Activated CD4-positive, alpha-beta memory T cell treated with anti-CD3 and anti-CD28 coated beads, Interleukin-2, amount 10 ng/mL, durations not matched to agents 7 days and 5 days (primary cell): ENCODE measurements at regions of chr3 and their contacts with region 1.

Region 1: DNA sequence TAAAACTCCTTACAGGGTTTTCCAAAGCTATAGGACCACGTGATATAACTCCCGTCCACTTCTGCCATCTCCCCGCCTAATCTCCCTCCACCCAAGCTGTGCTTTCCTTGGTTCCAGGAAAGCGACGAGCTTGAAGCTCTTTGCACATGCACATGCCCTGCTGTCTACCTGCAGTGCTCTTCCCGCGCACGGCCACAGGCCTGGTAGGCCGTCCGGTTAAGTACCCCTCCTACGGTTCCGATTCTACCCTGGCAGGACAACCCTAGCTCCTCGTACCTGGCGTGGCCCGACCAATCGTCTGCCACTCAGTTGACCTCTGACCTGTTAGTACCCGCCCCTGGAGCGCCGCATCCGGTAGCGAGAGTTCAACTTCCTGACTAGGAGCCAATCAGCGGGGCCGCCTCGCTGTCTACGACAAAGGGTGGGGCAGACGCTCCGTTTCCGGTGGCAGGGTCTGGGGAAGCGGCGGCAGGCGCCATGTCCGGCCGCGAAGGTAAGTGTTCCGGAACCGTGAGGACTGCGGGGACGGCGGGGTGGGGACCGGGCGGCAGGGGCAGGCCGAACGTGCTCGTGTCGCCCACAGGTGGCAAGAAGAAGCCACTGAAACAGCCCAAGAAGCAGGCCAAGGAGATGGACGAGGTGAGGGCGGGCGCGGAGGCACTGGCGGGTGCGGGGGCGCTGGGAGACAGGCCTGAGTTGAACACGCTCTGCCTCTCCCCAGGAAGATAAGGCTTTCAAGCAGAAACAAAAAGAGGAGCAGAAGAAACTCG is at the starts of genes CCDC51 and TMA7:
- DNase-seq: peak; percentile 99
- H3K4me3 Mint-ChIP-seq: peak within 1 kb of the TSS; percentile 89
- H3K27ac Mint-ChIP-seq: peak within 1 kb of the TSS; percentile 93
- H3K4me1 Mint-ChIP-seq: peaks cover 43% of the 10 kb centered on the region
- H3K27me3 Mint-ChIP-seq: no peaks in the 10 kb centered on the region
- total RNA-seq, gene CCDC51: 14.9 to 17.5 TPM
- total RNA-seq, gene TMA7: 240 to 241 TPM

Region 2: GRCh38 chr3:48232734-48233133 is 207.3 kb before region 1 on chr3:
- CTCF ChIA-PET with region 1: interaction called, 18 read pairs
- POLR2A ChIA-PET with region 1: no interaction called
- DNase-seq: peak; percentile 66
- H3K4me3 Mint-ChIP-seq: no peak overlapping the region
- H3K27ac Mint-ChIP-seq: no peak overlapping the region
- H3K4me1 Mint-ChIP-seq: peaks cover 5% of the 10 kb centered on the region
- H3K27me3 Mint-ChIP-seq: peaks cover 3% of the 10 kb centered on the region

Region 3: GRCh38 chr3:48273594-48274211 is 166.3 kb before region 1 on chr3:
- CTCF ChIA-PET with region 1: interaction called, 86 read pairs
- POLR2A ChIA-PET with region 1: interaction called, 5 read pairs
- DNase-seq: peak; percentile 57
- H3K4me3 Mint-ChIP-seq: no peak overlapping the region
- H3K27ac Mint-ChIP-seq: no peak overlapping the region
- H3K4me1 Mint-ChIP-seq: peaks cover 15% of the 10 kb centered on the region
- H3K27me3 Mint-ChIP-seq: no peaks in the 10 kb centered on the region

Region 4: GRCh38 chr3:48422270-48422669 is 17.7 kb before region 1 on chr3:
- CTCF ChIA-PET with region 1: interaction called, 26 read pairs
- POLR2A ChIA-PET with region 1: no interaction called
- DNase-seq: no peak
- H3K4me3 Mint-ChIP-seq: no peak overlapping the region
- H3K27ac Mint-ChIP-seq: no peak overlapping the region
- H3K4me1 Mint-ChIP-seq: no peaks in the 10 kb centered on the region
- H3K27me3 Mint-ChIP-seq: peaks cover 4% of the 10 kb centered on the region

Region 5: DNA sequence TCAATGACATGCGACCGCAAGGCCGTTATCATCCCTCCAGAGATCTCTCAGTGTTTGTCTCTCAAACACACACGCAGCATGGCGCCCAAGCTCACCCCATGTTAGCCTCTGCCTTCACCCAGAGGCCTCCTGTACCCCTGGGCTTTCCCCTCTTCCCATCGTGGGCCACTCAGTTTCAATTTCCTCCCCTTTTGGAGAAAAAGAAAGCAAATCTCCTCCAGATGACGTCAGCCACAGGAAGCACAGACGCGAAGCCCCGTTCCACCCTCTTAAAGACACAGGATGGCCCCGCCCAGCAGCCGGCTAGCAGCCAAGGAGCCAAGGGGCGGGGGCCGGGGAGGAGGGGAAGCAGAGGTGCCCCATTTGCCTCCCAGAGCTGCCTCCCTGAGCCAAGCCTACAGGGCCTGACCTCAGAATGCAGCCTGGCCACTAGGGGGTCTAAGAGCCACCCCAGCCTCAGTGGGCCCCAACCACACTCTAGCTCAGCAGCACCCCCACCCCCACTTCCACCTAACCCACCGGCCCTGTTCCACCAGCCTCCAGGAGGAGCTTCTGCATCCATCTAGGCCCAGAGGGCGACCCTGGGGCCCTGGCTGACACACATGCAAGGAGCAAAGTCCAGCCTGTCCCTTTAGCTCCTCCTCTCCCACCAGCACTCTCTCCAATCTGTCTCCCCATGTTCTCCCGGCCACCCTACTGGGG is 33.1 kb after region 1 on chr3:
- CTCF ChIA-PET with region 1: interaction called, 40 read pairs
- POLR2A ChIA-PET with region 1: interaction called, 69 read pairs
- DNase-seq: peak; percentile 97
- H3K4me3 Mint-ChIP-seq: peak overlapping the region; percentile 83
- H3K27ac Mint-ChIP-seq: peak overlapping the region; percentile 98
- H3K4me1 Mint-ChIP-seq: peaks cover 74% of the 10 kb centered on the region
- H3K27me3 Mint-ChIP-seq: no peaks in the 10 kb centered on the region

Region 6: GRCh38 chr3:48548729-48549705 is 109.0 kb after region 1 on chr3:
- CTCF ChIA-PET with region 1: interaction called, 180 read pairs
- POLR2A ChIA-PET with region 1: interaction called, 24 read pairs
- DNase-seq: peak; percentile 87
- H3K4me3 Mint-ChIP-seq: no peak overlapping the region
- H3K27ac Mint-ChIP-seq: no peak overlapping the region
- H3K4me1 Mint-ChIP-seq: peaks cover 8% of the 10 kb centered on the region
- H3K27me3 Mint-ChIP-seq: no peaks in the 10 kb centered on the region